Activated CD8-positive, alpha-beta T cell treated with anti-CD3 and anti-CD28 coated beads for 36 hours (primary cell): ENCODE measurements at regions of chr1 and their contacts with region 1.

Region 1: DNA sequence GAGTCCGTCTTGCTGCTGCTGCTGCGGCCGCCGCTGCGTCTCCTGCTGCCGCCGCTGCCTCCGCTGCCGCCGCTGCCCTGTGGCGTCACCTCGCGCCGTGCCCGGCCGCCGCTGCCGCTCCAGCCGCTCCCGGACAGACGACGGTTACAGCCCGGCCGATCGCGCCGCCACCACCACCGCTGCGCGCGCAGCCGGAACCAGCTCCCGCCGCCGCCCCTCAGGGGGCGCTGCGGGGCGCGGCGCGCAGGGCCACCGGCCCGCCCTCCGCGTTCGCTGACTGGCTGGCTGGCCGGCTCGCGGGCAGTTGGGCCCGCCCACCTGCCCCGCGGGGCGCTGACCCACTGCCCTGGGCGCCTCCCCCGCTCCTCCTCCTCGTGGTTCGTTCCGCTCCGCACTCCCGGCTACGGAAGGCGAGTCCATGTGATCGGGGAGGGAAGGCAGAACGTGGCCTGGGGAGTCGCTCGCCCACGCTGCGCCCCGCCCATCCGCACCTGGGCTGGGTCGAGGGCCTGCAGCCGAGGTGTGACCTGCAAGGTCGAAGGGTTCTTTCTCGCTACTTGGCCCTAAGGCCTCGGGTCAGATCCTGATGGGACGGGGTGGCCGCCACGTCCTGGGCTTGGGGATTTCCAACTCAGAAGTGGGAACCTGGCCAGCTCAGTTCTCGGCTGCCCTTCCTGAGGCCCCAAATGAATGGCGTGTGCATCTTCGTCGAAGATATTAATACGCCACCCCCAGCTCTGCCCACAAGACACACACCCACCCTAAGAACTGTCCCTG is at the start of gene PTP4A2:
- DNase-seq: peak; percentile 94
- ATAC-seq: peak; percentile 71
- H3K4me3 Mint-ChIP-seq: peak within 1 kb of the TSS; percentile 89
- H3K27ac Mint-ChIP-seq: peak within 1 kb of the TSS; percentile 98
- H3K4me1 Mint-ChIP-seq: peaks cover 57% of the 10 kb centered on the region
- H3K27me3 Mint-ChIP-seq: no peaks in the 10 kb centered on the region
- CTCF ChIP-seq: peak; percentile 34
- total RNA-seq, gene PTP4A2: 273 to 296 TPM

Region 2: GRCh38 chr1:31843506-31843905 is 94.9 kb before region 1 on chr1:
- CTCF ChIA-PET with region 1: no interaction called
- POLR2A ChIA-PET with region 1: no interaction called
- intact Hi-C with region 1: no loop called
- DNase-seq: no peak
- ATAC-seq: no peak
- H3K4me3 Mint-ChIP-seq: no peak overlapping the region
- H3K27ac Mint-ChIP-seq: no peak overlapping the region
- H3K4me1 Mint-ChIP-seq: peaks cover 44% of the 10 kb centered on the region
- H3K27me3 Mint-ChIP-seq: no peaks in the 10 kb centered on the region
- CTCF ChIP-seq: no peak

Region 3: DNA sequence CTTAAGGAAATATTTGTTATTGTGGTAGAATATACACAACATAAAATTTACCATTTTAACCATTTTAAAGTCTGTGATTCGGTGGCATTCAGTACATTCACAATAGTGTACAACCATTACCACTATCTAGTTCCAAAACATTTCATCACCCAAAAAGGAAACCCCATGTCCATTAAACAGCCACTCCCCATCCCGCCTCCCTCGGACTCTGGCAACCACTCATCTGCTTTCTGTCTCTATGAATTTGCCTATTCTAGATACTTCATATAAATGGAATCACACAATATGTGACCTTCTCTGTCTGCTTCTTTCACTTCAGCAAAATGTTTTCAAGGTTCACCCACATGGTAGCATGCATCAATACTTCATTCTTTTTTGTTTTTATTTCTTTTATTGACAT is 51.5 kb before region 1 on chr1:
- CTCF ChIA-PET with region 1: no interaction called
- POLR2A ChIA-PET with region 1: interaction called, 7 read pairs
- intact Hi-C with region 1: loop called (anchors 5 kb)
- DNase-seq: no peak
- ATAC-seq: no peak
- H3K4me3 Mint-ChIP-seq: no peak overlapping the region
- H3K27ac Mint-ChIP-seq: no peak overlapping the region
- H3K4me1 Mint-ChIP-seq: peaks cover 25% of the 10 kb centered on the region
- H3K27me3 Mint-ChIP-seq: no peaks in the 10 kb centered on the region
- CTCF ChIP-seq: no peak

Region 4: DNA sequence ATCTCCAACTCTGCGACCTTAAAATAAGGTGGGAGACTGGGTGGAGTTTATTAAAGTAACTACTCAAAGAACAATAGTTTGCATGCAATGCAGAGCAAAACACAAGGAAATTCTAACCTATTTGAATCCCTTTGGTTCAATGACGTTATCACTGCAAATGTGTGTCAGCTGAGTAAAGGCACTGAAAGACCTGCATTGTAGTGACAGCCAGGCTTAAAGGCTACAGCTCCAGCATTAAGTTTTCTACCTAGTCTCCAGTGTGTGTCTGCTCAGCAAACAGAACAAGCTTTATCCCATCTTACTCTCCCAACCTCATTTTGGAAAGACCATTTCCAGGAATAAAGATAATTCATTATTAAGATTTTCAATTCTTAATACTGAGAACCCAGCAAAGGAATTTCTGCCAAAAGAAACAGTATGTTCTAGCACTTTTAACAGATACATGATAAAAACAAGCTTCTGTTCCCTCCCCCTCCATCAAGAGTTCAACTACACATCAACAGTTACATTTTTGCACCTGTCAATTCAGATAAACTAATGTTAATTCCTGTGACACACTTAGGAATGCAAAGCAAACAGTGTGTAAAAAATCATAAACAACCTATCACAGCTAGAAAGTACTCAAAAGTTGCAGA is 14.3 kb before region 1 on chr1:
- CTCF ChIA-PET with region 1: interaction called, 14 read pairs
- POLR2A ChIA-PET with region 1: interaction called, 23 read pairs
- intact Hi-C with region 1: no loop called
- DNase-seq: no peak
- ATAC-seq: no peak
- H3K4me3 Mint-ChIP-seq: peak overlapping the region; percentile 46
- H3K27ac Mint-ChIP-seq: peak overlapping the region; percentile 89
- H3K4me1 Mint-ChIP-seq: peaks cover 72% of the 10 kb centered on the region
- H3K27me3 Mint-ChIP-seq: no peaks in the 10 kb centered on the region
- CTCF ChIP-seq: no peak

Region 5: DNA sequence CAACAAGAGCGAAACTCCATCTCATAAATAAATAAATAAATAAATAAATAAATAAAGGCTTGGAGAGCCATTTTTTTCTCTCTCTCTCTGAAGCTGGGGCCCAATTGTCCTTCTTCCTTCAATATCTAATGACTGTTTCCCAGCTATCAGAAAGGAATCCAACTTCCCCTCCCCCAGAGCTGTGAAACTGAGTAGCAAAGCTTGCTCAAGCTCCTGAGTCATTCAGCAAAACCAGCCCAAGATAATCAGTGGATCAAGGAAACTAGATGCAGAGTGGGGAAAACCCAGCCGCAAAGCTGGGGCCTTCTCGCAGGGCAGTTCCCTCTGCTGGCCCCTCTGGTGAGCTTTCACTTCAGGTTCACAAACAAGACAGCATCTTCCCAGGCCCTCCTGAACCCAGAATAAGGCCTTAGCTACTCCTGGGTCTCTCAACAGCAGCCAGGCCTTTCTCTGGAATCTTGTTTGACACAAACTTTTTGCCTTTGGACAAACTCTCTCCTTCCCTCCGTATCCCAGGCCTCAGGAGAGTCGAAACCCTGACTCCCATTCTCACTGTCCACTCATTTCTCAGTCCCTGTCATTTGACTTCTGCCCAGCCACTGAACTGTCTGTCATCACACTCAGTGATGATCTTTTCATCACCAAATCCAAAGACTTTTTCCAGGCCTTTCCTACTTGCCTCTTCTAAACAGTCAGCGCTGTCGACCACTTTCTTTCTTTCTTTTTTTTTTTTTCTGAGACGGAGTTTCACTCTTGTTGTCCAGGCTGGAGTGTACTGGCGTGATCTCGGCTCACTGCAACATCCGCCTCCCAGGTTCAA is 17.8 kb after region 1 on chr1:
- CTCF ChIA-PET with region 1: interaction called, 116 read pairs
- POLR2A ChIA-PET with region 1: interaction called, 120 read pairs
- intact Hi-C with region 1: loop called (anchors 2 kb)
- DNase-seq: peak; percentile 96
- ATAC-seq: peak; percentile 80
- H3K4me3 Mint-ChIP-seq: peak overlapping the region; percentile 62
- H3K27ac Mint-ChIP-seq: peak overlapping the region; percentile 95
- H3K4me1 Mint-ChIP-seq: peaks cover 66% of the 10 kb centered on the region
- H3K27me3 Mint-ChIP-seq: no peaks in the 10 kb centered on the region
- CTCF ChIP-seq: peak; percentile 13

Region 6: GRCh38 chr1:31961536-31961935 is 23.2 kb after region 1 on chr1:
- CTCF ChIA-PET with region 1: interaction called, 116 read pairs
- POLR2A ChIA-PET with region 1: interaction called, 120 read pairs
- intact Hi-C with region 1: loop called (anchors 2 kb)
- DNase-seq: no peak
- ATAC-seq: no peak
- H3K4me3 Mint-ChIP-seq: no peak overlapping the region
- H3K27ac Mint-ChIP-seq: peak overlapping the region; percentile 37
- H3K4me1 Mint-ChIP-seq: peaks cover 56% of the 10 kb centered on the region
- H3K27me3 Mint-ChIP-seq: no peaks in the 10 kb centered on the region
- CTCF ChIP-seq: no peak